SK-N-SH (cell line): ENCODE measurements at regions of chr3 and their contacts with region 1.

Region 1: GRCh38 chr3:12004741-12005513 is 739 bp downstream of the SYN2 start:
- DNase-seq: peak; percentile 80
- H3K4me3 ChIP-seq: peak overlapping the region in 1 of 2 experiments; percentile 52; a peak in 2 of 4 replicates
- H3K27ac ChIP-seq: no peak overlapping the region
- H3K4me1 ChIP-seq: peaks cover 0 to 19% of the 10 kb centered on the region in 2 experiments; a peak in 2 of 4 replicates
- H3K27me3 ChIP-seq: peaks cover 29% of the 10 kb centered on the region; the same call in 1 of the 2 replicates
- CTCF ChIP-seq: no peak
- EP300 ChIP-seq: no peak
- RAD21 ChIP-seq: no peak

Region 2: DNA sequence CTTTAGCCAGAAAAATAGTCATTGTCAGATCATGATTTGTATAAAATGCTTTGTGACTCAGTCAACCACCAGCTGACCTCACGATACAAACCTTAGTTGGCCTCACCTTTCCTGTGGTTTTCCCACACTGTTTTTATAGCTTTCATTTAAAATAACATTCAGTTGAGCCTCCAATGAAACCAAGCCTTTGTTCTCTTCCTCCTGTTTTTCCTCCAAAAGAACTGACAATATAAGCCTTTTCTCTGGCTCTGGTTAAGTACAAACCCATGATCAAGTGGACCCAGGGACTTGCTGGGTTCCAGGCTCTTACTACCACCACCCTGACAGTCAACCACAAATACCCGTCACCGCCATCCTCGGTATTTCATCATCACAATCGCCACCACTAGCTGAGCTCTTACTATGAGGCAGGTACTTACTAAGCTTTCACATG is 240.0 kb before region 1 on chr3:
- CTCF ChIA-PET with region 1: no interaction called
- POLR2A ChIA-PET with region 1: no interaction called
- DNase-seq: no peak
- H3K4me3 ChIP-seq: no peak overlapping the region
- H3K27ac ChIP-seq: peak overlapping the region in 1 of 2 experiments; percentile 12; a peak in 1 of 4 replicates
- H3K4me1 ChIP-seq: no peaks in the 10 kb centered on the region
- H3K27me3 ChIP-seq: no peaks in the 10 kb centered on the region
- CTCF ChIP-seq: no peak
- EP300 ChIP-seq: no peak
- RAD21 ChIP-seq: no peak

Region 3: GRCh38 chr3:12040902-12041301 is 36.0 kb after region 1 on chr3:
- CTCF ChIA-PET with region 1: interaction called, 10 read pairs
- POLR2A ChIA-PET with region 1: no interaction called
- DNase-seq: no peak
- H3K4me3 ChIP-seq: no peak overlapping the region
- H3K27ac ChIP-seq: no peak overlapping the region
- H3K4me1 ChIP-seq: peaks cover 0 to 9% of the 10 kb centered on the region in 2 experiments; a peak in 2 of 4 replicates
- H3K27me3 ChIP-seq: no peaks in the 10 kb centered on the region
- CTCF ChIP-seq: no peak
- EP300 ChIP-seq: no peak
- RAD21 ChIP-seq: no peak